Colonic mucosa (tissue), 4 donors: ENCODE measurements at regions of chr14 and their contacts with region 1.

Region 1: GRCh38 chr14:58107947-58108552 is 44.0 kb downstream of the ARMH4 start:
- DNase-seq: peak; percentile 32
- H3K4me3 ChIP-seq: no peak overlapping the region
- H3K27ac ChIP-seq: no peak overlapping the region
- H3K4me1 ChIP-seq: no peaks in the 10 kb centered on the region
- H3K27me3 ChIP-seq: no peaks in the 10 kb centered on the region
- CTCF ChIP-seq: peak; percentile 71

Region 2: DNA sequence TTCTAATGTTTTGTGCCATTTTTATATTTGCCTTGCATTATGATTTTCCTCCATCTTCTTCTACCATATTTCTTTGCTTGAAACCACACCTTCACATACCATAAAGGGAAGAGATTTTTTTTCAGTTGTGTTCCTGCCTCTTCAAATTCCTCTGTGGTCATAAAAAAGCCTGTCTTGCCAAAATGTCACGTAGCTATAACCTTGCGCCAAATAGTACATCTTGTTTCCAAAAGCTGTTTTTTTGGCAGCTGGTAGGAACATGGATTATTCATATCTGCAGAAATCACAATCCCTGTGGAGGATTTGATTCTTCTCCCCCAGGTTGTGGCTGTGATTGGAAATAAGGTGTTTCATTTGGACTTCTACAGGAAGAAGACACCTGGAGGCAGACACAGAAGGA is 108.6 kb before region 1 on chr14:
- intact Hi-C with region 1: no loop called
- DNase-seq: no peak
- H3K4me3 ChIP-seq: no peak overlapping the region
- H3K27ac ChIP-seq: no peak overlapping the region
- H3K4me1 ChIP-seq: no peaks in the 10 kb centered on the region
- H3K27me3 ChIP-seq: no peaks in the 10 kb centered on the region
- CTCF ChIP-seq: no peak

Region 3: GRCh38 chr14:58166005-58166983 is 58.2 kb after region 1 on chr14:
- intact Hi-C with region 1: loop called (anchors 2 kb)
- DNase-seq: peak; percentile 82
- H3K4me3 ChIP-seq: no peak overlapping the region
- H3K27ac ChIP-seq: no peak overlapping the region
- H3K4me1 ChIP-seq: no peaks in the 10 kb centered on the region
- H3K27me3 ChIP-seq: no peaks in the 10 kb centered on the region
- CTCF ChIP-seq: peak; percentile 80